Activated naive CD4-positive, alpha-beta T cell treated with anti-CD3 and anti-CD28 coated beads for 36 hours (primary cell): ENCODE measurements at regions of chr9 and their contacts with region 1.

Region 1: DNA sequence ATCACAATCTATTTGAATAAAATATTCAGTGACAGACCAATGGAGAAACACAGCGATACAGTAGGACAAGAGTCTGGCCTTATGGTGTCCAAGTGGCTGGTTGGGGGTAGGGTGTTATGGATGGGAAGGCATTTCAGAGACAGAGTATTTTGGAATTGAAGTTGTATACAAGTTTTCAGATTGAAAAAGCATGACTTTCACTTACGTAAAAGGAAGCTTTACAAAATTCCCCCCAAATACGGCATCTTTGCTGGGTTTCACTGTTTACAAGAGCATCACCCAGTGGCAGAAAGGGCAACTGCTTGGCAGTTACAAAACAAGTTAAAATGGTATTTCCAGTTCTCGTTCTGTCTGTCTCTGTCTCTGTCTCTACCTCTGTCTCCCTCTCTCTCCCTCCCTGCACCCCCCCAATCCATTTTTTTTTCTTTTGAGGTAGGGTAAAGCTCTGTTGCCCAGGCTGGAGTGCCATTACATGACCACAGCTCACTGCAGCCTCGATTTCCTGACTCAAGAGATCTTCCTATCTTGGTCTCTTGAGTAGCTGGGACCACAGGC is 86.2 kb downstream of the PTPN3 start:
- DNase-seq: peak; percentile 72
- H3K4me3 Mint-ChIP-seq: no peak overlapping the region
- H3K27ac Mint-ChIP-seq: peak overlapping the region; percentile 69
- H3K4me1 Mint-ChIP-seq: peaks cover 31% of the 10 kb centered on the region
- H3K27me3 Mint-ChIP-seq: peaks cover 22% of the 10 kb centered on the region

Region 2: DNA sequence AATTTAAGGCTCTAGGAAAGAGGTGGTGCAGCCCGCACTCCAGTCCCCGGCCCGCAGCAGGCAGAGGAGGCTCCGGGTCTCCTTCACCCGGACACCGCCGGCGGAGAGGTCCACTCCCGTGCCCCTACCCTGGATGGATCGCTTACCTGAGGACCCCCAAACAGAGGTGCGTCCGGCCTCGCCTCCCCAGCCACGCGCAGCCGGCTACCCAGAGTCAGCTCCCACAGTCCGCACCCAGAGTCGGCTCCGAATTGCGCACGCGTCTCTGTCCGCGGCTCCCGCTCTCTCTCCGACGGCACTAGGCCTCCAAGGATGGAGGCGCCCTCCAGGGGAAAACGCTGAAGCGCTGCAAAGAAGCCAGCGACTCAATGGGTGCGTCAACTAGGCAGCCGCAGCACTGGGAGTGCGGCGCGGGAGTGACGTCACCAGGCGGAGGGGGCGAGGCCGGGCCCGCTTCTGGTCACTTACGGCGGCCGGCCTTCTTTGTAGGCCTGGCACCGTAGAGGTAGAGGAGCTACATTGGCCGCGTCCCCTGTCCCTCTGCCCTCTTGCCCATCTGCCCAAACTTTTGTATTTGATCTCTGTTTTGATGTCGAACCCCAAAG is 478.1 kb before region 1 on chr9 and contains the start of gene ELP1:
- CTCF ChIA-PET with region 1: no interaction called
- intact Hi-C with region 1: loop called (anchors 2 kb)
- DNase-seq: peak; percentile 94
- H3K4me3 Mint-ChIP-seq: peak within 1 kb of the TSS; percentile 95
- H3K27ac Mint-ChIP-seq: peak within 1 kb of the TSS; percentile 92
- H3K4me1 Mint-ChIP-seq: peaks cover 27% of the 10 kb centered on the region
- H3K27me3 Mint-ChIP-seq: no peaks in the 10 kb centered on the region
- total RNA-seq, gene ELP1: 22.3 to 27.3 TPM

Region 3: GRCh38 chr9:109092051-109092580 is 319.8 kb before region 1 on chr9:
- CTCF ChIA-PET with region 1: no interaction called
- intact Hi-C with region 1: loop called (anchors 2 kb)
- DNase-seq: no peak
- H3K4me3 Mint-ChIP-seq: no peak overlapping the region
- H3K27ac Mint-ChIP-seq: no peak overlapping the region
- H3K4me1 Mint-ChIP-seq: peaks cover 49% of the 10 kb centered on the region
- H3K27me3 Mint-ChIP-seq: no peaks in the 10 kb centered on the region

Region 4: DNA sequence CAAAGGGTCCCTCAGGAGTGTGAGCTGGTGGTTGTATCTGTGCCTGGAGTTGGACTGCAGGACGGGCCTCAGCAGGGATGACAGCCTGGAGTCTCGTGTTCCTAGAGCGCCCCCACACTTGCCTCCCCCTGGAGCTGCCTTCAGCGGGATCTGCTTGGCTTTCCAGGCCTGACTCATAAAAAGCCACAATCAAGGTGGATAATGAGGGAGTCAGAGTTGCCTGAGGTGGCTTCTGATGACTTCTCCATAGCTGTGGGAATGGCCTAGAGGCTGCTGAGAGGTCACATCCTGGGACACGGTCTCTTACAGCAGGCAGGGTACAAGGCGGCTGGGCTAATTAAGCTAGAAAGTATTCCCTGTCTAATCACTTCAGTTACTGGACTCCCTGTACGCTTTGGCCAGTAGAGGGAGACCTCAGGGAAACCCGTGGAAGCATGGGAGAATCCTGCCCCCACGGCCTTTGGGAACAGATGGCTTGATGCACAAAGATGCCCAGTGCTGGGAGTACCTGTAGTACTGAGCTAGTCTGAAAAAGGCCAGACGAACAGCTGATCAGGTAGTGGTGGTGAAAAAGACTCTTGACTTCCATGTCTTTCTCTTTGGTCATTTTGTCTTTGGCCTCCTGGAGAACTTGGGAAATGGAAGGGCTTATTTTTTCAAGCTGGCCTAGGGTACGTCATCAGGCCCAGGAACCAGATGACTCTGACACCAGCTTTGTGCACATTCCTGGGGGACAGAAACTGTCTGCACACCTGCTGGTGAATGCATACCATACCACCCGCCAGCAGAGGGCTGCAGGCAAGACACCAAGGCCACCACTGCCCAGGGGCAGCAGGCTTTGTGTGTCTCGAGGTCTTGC is 228.7 kb before region 1 on chr9:
- CTCF ChIA-PET with region 1: interaction called, 7 read pairs
- intact Hi-C with region 1: loop called (anchors 1 kb)
- DNase-seq: peak; percentile 23
- H3K4me3 Mint-ChIP-seq: no peak overlapping the region
- H3K27ac Mint-ChIP-seq: no peak overlapping the region
- H3K4me1 Mint-ChIP-seq: peaks cover 15% of the 10 kb centered on the region
- H3K27me3 Mint-ChIP-seq: peaks cover 3% of the 10 kb centered on the region

Region 5: GRCh38 chr9:109320742-109321448 is 91.0 kb before region 1 on chr9 and contains the start of gene EPB41L4B:
- CTCF ChIA-PET with region 1: interaction called, 3 read pairs
- intact Hi-C with region 1: loop called (anchors 2 kb)
- DNase-seq: peak; percentile 95
- H3K4me3 Mint-ChIP-seq: peak within 1 kb of the TSS; percentile 69
- H3K27ac Mint-ChIP-seq: no peak within 1 kb of the TSS
- H3K4me1 Mint-ChIP-seq: peaks cover 10% of the 10 kb centered on the region
- H3K27me3 Mint-ChIP-seq: peaks cover 50% of the 10 kb centered on the region
- total RNA-seq, gene EPB41L4B: 0.24 to 0.25 TPM

Region 6: GRCh38 chr9:109469646-109470358 is 57.9 kb after region 1 on chr9:
- CTCF ChIA-PET with region 1: interaction called, 12 read pairs
- intact Hi-C with region 1: loop called (anchors 2 kb)
- DNase-seq: peak; percentile 85
- H3K4me3 Mint-ChIP-seq: no peak overlapping the region
- H3K27ac Mint-ChIP-seq: no peak overlapping the region
- H3K4me1 Mint-ChIP-seq: no peaks in the 10 kb centered on the region
- H3K27me3 Mint-ChIP-seq: peaks cover 5% of the 10 kb centered on the region

Region 7: GRCh38 chr9:109972026-109972882 is 560.4 kb after region 1 on chr9:
- CTCF ChIA-PET with region 1: interaction called, 3 read pairs
- intact Hi-C with region 1: loop called (anchors 10 kb)
- DNase-seq: peak; percentile 56
- H3K4me3 Mint-ChIP-seq: no peak overlapping the region
- H3K27ac Mint-ChIP-seq: peak overlapping the region; percentile 4
- H3K4me1 Mint-ChIP-seq: peaks cover 86% of the 10 kb centered on the region
- H3K27me3 Mint-ChIP-seq: no peaks in the 10 kb centered on the region